ENCODE measurements at regions of chr1 and their contacts with region 1.

Region 1: GRCh38 chr1:15272009-15272788 is 25.2 kb downstream of the FHAD1 start:
- DNase-seq: peak; percentile 72
- H3K4me3 ChIP-seq: no peak overlapping the region
- H3K27ac ChIP-seq: no peak overlapping the region
- H3K4me1 ChIP-seq: no peaks in the 10 kb centered on the region
- H3K27me3 ChIP-seq: no peaks in the 10 kb centered on the region
- CTCF ChIP-seq: peak; percentile 76 to 79
- POLR2A ChIP-seq: no peak

Region 2: GRCh38 chr1:15196807-15197530 is 75.2 kb before region 1 on chr1:
- CTCF ChIA-PET with region 1: interaction called, 7 read pairs
- POLR2A ChIA-PET with region 1: no interaction called
- dilution Hi-C with region 1: no loop called
- intact Hi-C with region 1: loop called (anchors 1 kb)
- DNase-seq: no peak
- H3K4me3 ChIP-seq: no peak overlapping the region
- H3K27ac ChIP-seq: no peak overlapping the region
- H3K4me1 ChIP-seq: peaks cover 14% of the 10 kb centered on the region
- H3K27me3 ChIP-seq: no peaks in the 10 kb centered on the region
- CTCF ChIP-seq: no peak
- POLR2A ChIP-seq: no peak

Region 3: GRCh38 chr1:15261155-15262002 is 10.8 kb before region 1 on chr1:
- CTCF ChIA-PET with region 1: interaction called, 33 read pairs
- POLR2A ChIA-PET with region 1: no interaction called
- dilution Hi-C with region 1: no loop called
- intact Hi-C with region 1: loop called (anchors 1 kb)
- DNase-seq: peak; percentile 74
- H3K4me3 ChIP-seq: peak overlapping the region in 2 of 3 experiments; percentile 6 to 25
- H3K27ac ChIP-seq: peak overlapping the region; percentile 78
- H3K4me1 ChIP-seq: peaks cover 23% of the 10 kb centered on the region
- H3K27me3 ChIP-seq: peaks cover 0 to 5% of the 10 kb centered on the region in 2 experiments
- CTCF ChIP-seq: no peak
- POLR2A ChIP-seq: no peak

Region 4: DNA sequence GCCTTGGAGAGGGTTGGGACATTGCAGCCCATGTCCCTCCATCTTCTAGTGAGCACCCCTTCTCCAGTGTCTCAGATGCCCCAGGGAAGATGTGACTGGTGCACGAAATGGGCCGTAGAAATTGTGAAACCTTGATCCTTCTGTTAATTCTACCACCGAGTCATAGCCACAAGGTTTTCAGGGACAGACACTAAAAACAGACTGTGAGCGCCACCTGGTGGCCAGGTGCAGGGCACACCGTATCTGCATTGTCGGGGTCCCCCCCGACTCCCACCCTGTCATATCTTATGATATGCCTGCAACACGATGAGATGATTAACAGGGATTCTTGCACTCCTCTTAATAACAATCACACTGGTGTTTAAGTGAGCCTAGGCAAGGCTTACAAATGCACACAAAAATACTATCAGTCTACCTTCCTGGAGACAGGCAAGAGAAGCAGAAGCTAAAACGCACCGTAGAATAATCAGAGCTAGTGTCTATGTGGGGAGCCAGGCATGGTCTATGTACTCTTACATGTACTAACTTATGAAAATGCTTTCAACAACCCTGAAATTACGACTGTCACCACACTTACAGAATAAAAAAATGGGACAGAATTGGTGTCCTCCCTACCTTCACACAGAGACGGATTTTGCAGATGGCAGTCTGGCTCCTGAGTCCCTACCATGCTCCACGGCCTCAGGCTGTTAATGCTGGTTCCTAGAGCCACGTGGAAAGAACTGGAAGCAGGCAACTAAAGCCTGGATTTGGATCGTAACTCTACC is 32.7 kb after region 1 on chr1:
- CTCF ChIA-PET with region 1: interaction called, 4 read pairs
- POLR2A ChIA-PET with region 1: no interaction called
- dilution Hi-C with region 1: no loop called
- intact Hi-C with region 1: loop called (anchors 1 kb)
- DNase-seq: peak; percentile 49
- H3K4me3 ChIP-seq: no peak overlapping the region
- H3K27ac ChIP-seq: no peak overlapping the region
- H3K4me1 ChIP-seq: no peaks in the 10 kb centered on the region
- H3K27me3 ChIP-seq: no peaks in the 10 kb centered on the region
- CTCF ChIP-seq: peak; percentile 85 to 87
- POLR2A ChIP-seq: no peak

Region 5: DNA sequence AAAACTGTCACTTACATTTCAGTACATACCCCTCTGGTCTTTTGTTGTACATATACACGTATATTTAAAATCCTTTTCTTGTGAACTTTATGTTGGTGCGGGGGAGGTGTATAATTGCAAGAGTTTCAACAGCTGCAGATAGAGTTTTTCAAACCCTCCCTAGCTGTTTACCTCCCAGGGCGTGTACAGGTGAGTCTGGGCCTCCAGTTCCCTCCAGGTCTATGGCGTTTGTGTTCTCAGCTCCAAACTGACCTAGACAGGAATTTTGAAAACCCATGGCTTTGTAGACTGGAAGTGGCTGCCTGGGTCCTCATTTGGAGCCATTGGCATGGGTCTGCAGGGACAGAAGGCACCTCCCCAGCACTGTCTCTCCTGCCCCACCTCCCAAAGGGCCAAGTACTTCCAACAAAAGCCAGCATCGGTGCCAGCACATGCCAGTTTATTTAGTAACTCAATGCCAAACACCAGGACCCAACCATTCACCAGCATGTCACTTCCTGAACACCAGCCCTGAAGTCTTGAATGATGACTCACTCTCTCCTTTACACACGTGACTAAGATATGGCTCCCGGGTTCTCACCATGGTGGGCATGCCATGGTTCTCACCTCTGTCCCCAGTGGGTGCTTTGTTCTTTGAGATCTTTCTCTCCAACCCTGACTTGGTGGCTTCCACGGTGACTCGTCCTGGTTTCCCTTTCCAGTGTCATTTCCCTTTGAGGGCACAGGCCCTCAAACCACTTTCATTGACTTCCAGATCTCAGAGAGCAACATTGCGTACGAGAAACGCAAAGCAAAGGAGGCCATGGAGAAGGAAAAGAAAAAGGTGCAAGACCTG is 80.1 kb after region 1 on chr1:
- CTCF ChIA-PET with region 1: no interaction called
- POLR2A ChIA-PET with region 1: no interaction called
- dilution Hi-C with region 1: no loop called
- intact Hi-C with region 1: no loop called
- DNase-seq: peak; percentile 81
- H3K4me3 ChIP-seq: no peak overlapping the region
- H3K27ac ChIP-seq: peak overlapping the region; percentile 73
- H3K4me1 ChIP-seq: peaks cover 20% of the 10 kb centered on the region
- H3K27me3 ChIP-seq: no peaks in the 10 kb centered on the region
- CTCF ChIP-seq: no peak
- POLR2A ChIP-seq: no peak

Measured in endothelial cell of umbilical vein (primary cell).